ENCODE measurements at regions of chr1 and their contacts with region 1.

Region 1: GRCh38 chr1:151346769-151347522 is at the start of gene RFX5:
- DNase-seq: peak; percentile 98
- H3K4me3 Mint-ChIP-seq: peak within 1 kb of the TSS; percentile 95
- H3K27ac Mint-ChIP-seq: peak within 1 kb of the TSS; percentile 98
- H3K4me1 Mint-ChIP-seq: peaks cover 38% of the 10 kb centered on the region
- H3K27me3 Mint-ChIP-seq: no peaks in the 10 kb centered on the region
- total RNA-seq, gene RFX5: 69.2 and 73.1 TPM in 2 replicates

Region 2: DNA sequence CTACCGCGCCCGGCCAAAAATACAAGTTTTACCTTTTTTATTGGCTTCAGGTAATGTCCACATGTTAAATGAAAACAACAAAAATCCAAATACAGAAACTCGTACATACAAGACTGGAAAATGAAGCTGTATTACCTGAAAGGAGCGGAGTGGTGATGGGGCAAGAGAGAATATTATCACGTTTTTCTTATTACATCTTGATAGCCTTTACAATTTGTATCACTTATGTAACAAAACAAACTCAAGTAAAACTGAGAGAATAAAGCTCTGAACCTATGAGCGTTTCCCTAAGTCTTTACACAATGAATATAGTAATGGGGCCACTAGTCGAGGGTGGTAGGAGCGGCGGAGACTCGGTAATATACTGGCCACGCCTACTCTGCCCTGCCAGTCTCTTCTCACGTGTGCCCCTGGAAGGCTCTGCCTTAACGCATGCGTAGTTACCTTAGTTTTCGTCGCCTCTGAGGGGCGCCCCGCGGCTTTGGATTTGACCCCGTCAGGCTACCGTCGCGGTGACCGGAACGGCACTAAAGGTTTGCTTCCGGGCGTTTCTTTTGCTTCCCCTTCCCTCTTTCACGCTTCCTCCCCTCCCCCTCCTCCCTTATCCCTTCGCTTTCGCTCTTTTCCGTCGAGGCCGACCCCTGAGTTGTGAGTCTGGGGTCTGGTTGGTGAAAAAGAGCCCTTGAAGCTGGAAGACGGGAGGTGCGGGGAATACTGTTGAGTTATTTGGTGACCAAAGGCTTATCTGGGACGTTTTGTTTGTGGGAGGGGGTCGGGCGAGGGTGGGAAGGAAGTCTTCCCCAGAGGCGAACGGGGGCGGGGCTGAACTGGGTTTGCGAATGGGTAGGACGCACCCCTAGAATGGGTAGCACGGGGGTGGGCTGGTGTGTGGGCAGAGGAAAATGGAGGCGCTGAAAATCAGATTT is 420.9 kb before region 1 on chr1 and contains the start of gene SETDB1:
- intact Hi-C with region 1: no loop called
- DNase-seq: peak; percentile 97
- H3K4me3 Mint-ChIP-seq: peak within 1 kb of the TSS; percentile 93
- H3K27ac Mint-ChIP-seq: peak within 1 kb of the TSS; percentile 97
- H3K4me1 Mint-ChIP-seq: peaks cover 28% of the 10 kb centered on the region
- H3K27me3 Mint-ChIP-seq: no peaks in the 10 kb centered on the region
- total RNA-seq, gene SETDB1: 56.2 and 62.3 TPM in 2 replicates

Region 3: GRCh38 chr1:151327223-151327902 is 19.6 kb before region 1 on chr1 and contains the start of gene PI4KB:
- intact Hi-C with region 1: loop called (anchors 2 kb)
- DNase-seq: peak; percentile 97
- H3K4me3 Mint-ChIP-seq: peak within 1 kb of the TSS; percentile 95
- H3K27ac Mint-ChIP-seq: peak within 1 kb of the TSS; percentile 97
- H3K4me1 Mint-ChIP-seq: peaks cover 28% of the 10 kb centered on the region
- H3K27me3 Mint-ChIP-seq: no peaks in the 10 kb centered on the region
- total RNA-seq, gene PI4KB: 57.1 and 59.2 TPM in 2 replicates

Region 4: DNA sequence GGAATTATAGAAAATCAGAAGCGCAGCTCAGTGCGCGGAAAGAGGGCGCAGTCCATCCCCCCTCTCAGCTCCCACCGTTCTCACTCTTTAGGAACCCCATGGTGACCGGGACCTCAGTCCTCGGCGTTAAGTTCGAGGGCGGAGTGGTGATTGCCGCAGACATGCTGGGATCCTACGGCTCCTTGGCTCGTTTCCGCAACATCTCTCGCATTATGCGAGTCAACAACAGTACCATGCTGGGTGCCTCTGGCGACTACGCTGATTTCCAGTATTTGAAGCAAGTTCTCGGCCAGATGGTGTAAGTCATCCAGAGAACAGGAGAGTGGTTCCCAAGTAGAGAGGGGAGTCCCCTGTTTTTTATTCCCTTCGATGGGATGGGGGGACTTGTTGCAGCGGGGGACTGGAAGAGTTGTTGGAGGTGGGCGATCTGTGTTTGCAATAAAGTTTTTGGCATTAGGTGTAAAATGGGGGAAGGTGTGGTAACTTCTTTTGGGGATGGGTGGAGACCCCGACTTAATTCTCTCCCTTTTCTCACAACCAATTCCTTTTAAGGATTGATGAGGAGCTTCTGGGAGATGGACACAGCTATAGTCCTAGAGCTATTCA is 53.0 kb after region 1 on chr1:
- intact Hi-C with region 1: loop called (anchors 1 kb)
- DNase-seq: no peak
- H3K4me3 Mint-ChIP-seq: peak overlapping the region; percentile 94
- H3K27ac Mint-ChIP-seq: peak overlapping the region; percentile 100
- H3K4me1 Mint-ChIP-seq: peaks cover 23% of the 10 kb centered on the region
- H3K27me3 Mint-ChIP-seq: no peaks in the 10 kb centered on the region

Region 5: GRCh38 chr1:151513626-151514427 is 166.9 kb after region 1 on chr1:
- intact Hi-C with region 1: no loop called
- DNase-seq: peak; percentile 64
- H3K4me3 Mint-ChIP-seq: peak overlapping the region; percentile 34
- H3K27ac Mint-ChIP-seq: no peak overlapping the region
- H3K4me1 Mint-ChIP-seq: peaks cover 25% of the 10 kb centered on the region
- H3K27me3 Mint-ChIP-seq: peaks cover 26% of the 10 kb centered on the region